ENCODE measurements at regions of chr6 and their contacts with region 1.

Region 1: DNA sequence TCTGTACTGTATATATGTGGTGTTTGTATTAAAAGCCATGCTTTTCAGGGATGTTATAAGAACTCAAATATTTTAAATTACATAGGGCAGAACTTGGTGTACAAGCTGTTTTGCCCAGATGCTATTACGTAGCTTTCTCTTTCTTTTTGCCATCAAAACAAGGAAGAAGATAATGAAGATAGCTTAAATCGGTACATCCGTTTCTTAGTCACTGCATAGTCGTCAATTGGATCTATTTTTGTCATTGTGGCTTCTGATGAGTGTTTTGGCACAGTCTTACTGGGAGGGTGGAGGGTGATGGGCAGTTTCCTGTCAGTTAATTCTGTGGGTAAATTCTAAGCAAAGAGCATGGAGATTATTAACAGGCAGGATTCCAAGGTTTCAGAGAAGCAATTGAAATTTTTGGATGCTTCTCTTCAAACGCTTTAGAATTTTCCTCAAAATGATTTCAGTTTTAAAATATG is 649.1 kb upstream of the GJE1 start:
- DNase-seq: peak; percentile 68
- H3K4me3 Mint-ChIP-seq: peak overlapping the region; percentile 65
- H3K27ac Mint-ChIP-seq: peak overlapping the region; percentile 95
- H3K4me1 Mint-ChIP-seq: peaks cover 49% of the 10 kb centered on the region
- H3K27me3 Mint-ChIP-seq: no peaks in the 10 kb centered on the region

Region 2: DNA sequence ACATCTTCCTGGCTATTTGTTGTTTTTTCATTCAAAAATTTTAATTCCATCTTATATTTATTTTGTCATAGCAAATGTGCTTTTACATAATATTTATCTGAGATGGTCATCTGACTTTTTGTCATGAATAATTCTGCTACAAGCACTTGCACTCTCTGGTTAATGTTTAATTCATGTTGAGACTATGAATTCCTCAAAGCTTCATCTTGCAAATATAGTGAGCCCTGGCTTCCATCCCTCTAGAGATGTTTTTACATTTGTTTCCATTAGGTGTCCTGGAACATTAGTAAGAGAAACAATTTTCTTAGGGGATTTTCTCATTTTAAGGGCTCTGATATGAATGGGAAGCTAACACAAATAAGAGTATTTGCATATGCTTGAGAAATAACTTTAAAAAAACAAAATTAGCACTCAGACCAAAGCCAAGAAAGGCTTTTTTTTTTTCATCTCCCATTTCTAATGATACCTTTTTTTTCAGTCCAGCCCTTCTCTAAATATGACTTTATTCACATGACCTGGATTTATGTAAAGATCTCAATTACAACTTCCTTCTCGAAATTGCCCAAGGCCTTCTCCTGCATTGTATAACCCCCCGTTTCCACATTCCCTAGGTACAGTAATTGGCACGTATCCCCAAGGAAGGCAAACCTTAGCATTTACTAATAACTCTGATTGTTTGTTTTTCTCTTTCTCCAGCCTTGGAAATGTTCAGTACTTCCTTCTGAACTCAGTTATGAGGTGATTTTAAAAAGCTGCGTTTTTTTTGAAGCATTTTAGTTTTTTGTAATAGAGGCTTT is 148.0 kb before region 1 on chr6:
- CTCF ChIA-PET with region 1: no interaction called
- POLR2A ChIA-PET with region 1: no interaction called
- DNase-seq: no peak
- H3K4me3 Mint-ChIP-seq: no peak overlapping the region
- H3K27ac Mint-ChIP-seq: no peak overlapping the region
- H3K4me1 Mint-ChIP-seq: no peaks in the 10 kb centered on the region
- H3K27me3 Mint-ChIP-seq: no peaks in the 10 kb centered on the region

Region 3: GRCh38 chr6:141472162-141472928 is 11.3 kb before region 1 on chr6:
- CTCF ChIA-PET with region 1: no interaction called
- POLR2A ChIA-PET with region 1: interaction called, 10 read pairs
- DNase-seq: no peak
- H3K4me3 Mint-ChIP-seq: no peak overlapping the region
- H3K27ac Mint-ChIP-seq: no peak overlapping the region
- H3K4me1 Mint-ChIP-seq: peaks cover 6% of the 10 kb centered on the region
- H3K27me3 Mint-ChIP-seq: no peaks in the 10 kb centered on the region

Region 4: GRCh38 chr6:141496496-141496895 is 12.9 kb after region 1 on chr6:
- CTCF ChIA-PET with region 1: interaction called, 8 read pairs
- POLR2A ChIA-PET with region 1: interaction called, 12 read pairs
- DNase-seq: no peak
- H3K4me3 Mint-ChIP-seq: no peak overlapping the region
- H3K27ac Mint-ChIP-seq: no peak overlapping the region
- H3K4me1 Mint-ChIP-seq: no peaks in the 10 kb centered on the region
- H3K27me3 Mint-ChIP-seq: no peaks in the 10 kb centered on the region